B cell (primary cell): ENCODE measurements at regions of chr1 and their contacts with region 1.

Region 1: GRCh38 chr1:64966158-64966971 is at the start of gene JAK1:
- DNase-seq: peak; percentile 92
- ATAC-seq: peak; percentile 83
- H3K4me3 ChIP-seq: peak within 1 kb of the TSS; percentile 73 to 100 (median 91)
- H3K4me3 Mint-ChIP-seq: peak within 1 kb of the TSS; percentile 93
- H3K27ac ChIP-seq: peak within 1 kb of the TSS; percentile 79 to 96
- H3K27ac Mint-ChIP-seq: peak within 1 kb of the TSS; percentile 96
- H3K4me1 ChIP-seq: peaks cover 44 to 49% of the 10 kb centered on the region in 2 donors
- H3K4me1 Mint-ChIP-seq: peaks cover 43% of the 10 kb centered on the region
- H3K27me3 ChIP-seq: no peaks in the 10 kb centered on the region
- H3K27me3 Mint-ChIP-seq: no peaks in the 10 kb centered on the region
- CTCF ChIP-seq: no peak
- total RNA-seq, gene JAK1: 244 and 260 TPM in 2 replicates

Region 2: DNA sequence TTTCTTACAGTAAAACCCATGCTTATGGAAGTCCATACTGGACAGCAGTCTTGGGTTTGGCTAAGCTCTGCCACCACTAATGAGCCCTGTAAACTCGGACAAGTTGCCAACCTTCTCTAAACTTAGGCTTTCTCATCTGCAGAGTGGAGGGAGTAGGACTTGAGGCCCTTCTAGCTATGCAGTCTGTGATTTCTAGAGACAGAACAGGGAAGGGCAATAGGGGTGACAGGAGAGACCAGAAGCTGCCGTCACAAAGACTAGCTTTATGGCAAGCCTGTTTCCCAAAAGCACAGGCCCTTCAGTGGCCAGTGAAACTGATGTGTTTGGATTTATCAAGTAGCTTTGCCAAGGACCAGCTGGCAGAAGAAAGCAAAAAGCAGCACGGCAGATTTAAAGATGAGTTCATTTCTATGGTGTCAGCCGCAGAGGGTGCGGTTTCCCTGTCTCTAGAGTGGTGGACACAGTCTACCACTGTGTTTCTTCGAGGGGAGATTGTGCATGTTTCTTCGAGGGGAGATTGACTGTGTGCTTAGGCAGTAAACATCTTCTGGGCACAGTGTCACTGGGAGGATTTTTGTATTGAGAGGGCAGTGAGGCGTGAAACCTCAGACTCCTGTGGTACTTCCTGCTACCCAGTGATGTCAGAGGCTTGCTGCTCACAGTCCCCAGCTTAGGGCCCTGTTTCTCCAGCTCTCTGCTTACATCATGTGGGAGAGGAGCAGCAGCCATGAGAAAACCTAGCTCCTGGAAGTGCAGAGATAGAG is 1073.6 kb before region 1 on chr1:
- CTCF ChIA-PET with region 1: no interaction called
- POLR2A ChIA-PET with region 1: no interaction called
- intact Hi-C with region 1: no loop called
- DNase-seq: peak; percentile 90
- ATAC-seq: peak; percentile 83
- H3K4me3 ChIP-seq: peak overlapping the region in 1 of 5 experiments; percentile 5
- H3K4me3 Mint-ChIP-seq: peak overlapping the region; percentile 69
- H3K27ac ChIP-seq: peak overlapping the region; percentile 73 to 74
- H3K27ac Mint-ChIP-seq: peak overlapping the region; percentile 94
- H3K4me1 ChIP-seq: peaks cover 38 to 53% of the 10 kb centered on the region in 2 donors
- H3K4me1 Mint-ChIP-seq: peaks cover 52% of the 10 kb centered on the region
- H3K27me3 ChIP-seq: peaks cover 0 to 8% (median 6%) of the 10 kb centered on the region in 4 experiments
- H3K27me3 Mint-ChIP-seq: peaks cover 22% of the 10 kb centered on the region
- CTCF ChIP-seq: no peak

Region 3: GRCh38 chr1:65002508-65003315 is 36.3 kb after region 1 on chr1:
- CTCF ChIA-PET with region 1: interaction called, 5 read pairs
- POLR2A ChIA-PET with region 1: interaction called, 19 read pairs
- intact Hi-C with region 1: loop called (anchors 1 kb)
- DNase-seq: peak; percentile 75
- ATAC-seq: peak; percentile 76
- H3K4me3 ChIP-seq: peak overlapping the region; percentile 39 to 74 (median 61)
- H3K4me3 Mint-ChIP-seq: peak overlapping the region; percentile 86
- H3K27ac ChIP-seq: peak overlapping the region in 1 of 2 donors; percentile 14
- H3K27ac Mint-ChIP-seq: peak overlapping the region; percentile 37
- H3K4me1 ChIP-seq: peaks cover 19 to 23% of the 10 kb centered on the region in 2 donors
- H3K4me1 Mint-ChIP-seq: peaks cover 26% of the 10 kb centered on the region
- H3K27me3 ChIP-seq: peaks cover 0 to 18% (median 5%) of the 10 kb centered on the region in 4 experiments
- H3K27me3 Mint-ChIP-seq: no peaks in the 10 kb centered on the region
- CTCF ChIP-seq: no peak

Region 4: DNA sequence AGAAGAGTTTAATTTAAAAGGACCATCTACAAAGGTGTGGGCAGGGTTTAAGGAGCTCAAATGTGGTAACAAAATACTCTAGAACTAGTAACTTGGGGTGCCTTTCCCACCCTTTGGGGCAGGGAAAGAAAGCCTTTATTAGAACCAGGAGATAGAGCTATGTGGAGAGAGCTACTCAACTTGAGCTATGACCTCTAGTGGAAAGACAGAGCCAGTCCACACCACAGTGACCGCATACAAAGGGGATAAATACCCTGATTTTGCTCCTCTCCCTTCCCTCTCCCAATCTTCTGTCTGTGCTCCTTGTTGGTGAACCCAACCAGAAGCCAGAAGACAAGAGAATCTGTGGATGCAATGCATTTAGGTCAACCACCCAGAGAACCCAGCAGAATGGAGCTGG is 54.4 kb after region 1 on chr1:
- CTCF ChIA-PET with region 1: interaction called, 10 read pairs
- POLR2A ChIA-PET with region 1: no interaction called
- intact Hi-C with region 1: no loop called
- DNase-seq: no peak
- ATAC-seq: no peak
- H3K4me3 ChIP-seq: no peak overlapping the region
- H3K4me3 Mint-ChIP-seq: no peak overlapping the region
- H3K27ac ChIP-seq: no peak overlapping the region
- H3K27ac Mint-ChIP-seq: no peak overlapping the region
- H3K4me1 ChIP-seq: no peaks in the 10 kb centered on the region
- H3K4me1 Mint-ChIP-seq: no peaks in the 10 kb centered on the region
- H3K27me3 ChIP-seq: no peaks in the 10 kb centered on the region
- H3K27me3 Mint-ChIP-seq: no peaks in the 10 kb centered on the region
- CTCF ChIP-seq: peak; percentile 16

Region 5: GRCh38 chr1:66924756-66925557 is 1958.6 kb after region 1 on chr1 and contains the starts of genes DNAI4 and MIER1:
- CTCF ChIA-PET with region 1: no interaction called
- POLR2A ChIA-PET with region 1: no interaction called
- intact Hi-C with region 1: loop called (anchors 10 kb)
- DNase-seq: peak; percentile 99
- ATAC-seq: peak; percentile 94
- H3K4me3 ChIP-seq: peak within 1 kb of the TSS; percentile 66 to 93 (median 84)
- H3K4me3 Mint-ChIP-seq: peak within 1 kb of the TSS; percentile 91
- H3K27ac ChIP-seq: peak within 1 kb of the TSS; percentile 91 to 99
- H3K27ac Mint-ChIP-seq: peak within 1 kb of the TSS; percentile 92
- H3K4me1 ChIP-seq: peaks cover 21 to 23% of the 10 kb centered on the region in 2 donors
- H3K4me1 Mint-ChIP-seq: peaks cover 29% of the 10 kb centered on the region
- H3K27me3 ChIP-seq: no peaks in the 10 kb centered on the region
- H3K27me3 Mint-ChIP-seq: no peaks in the 10 kb centered on the region
- CTCF ChIP-seq: peak; percentile 42
- total RNA-seq, gene DNAI4: 2.7 and 4.3 TPM in 2 replicates
- total RNA-seq, gene MIER1: 55.0 and 56.5 TPM in 2 replicates